ENCODE measurements at regions of chr6 and their contacts with region 1.

Region 1: DNA sequence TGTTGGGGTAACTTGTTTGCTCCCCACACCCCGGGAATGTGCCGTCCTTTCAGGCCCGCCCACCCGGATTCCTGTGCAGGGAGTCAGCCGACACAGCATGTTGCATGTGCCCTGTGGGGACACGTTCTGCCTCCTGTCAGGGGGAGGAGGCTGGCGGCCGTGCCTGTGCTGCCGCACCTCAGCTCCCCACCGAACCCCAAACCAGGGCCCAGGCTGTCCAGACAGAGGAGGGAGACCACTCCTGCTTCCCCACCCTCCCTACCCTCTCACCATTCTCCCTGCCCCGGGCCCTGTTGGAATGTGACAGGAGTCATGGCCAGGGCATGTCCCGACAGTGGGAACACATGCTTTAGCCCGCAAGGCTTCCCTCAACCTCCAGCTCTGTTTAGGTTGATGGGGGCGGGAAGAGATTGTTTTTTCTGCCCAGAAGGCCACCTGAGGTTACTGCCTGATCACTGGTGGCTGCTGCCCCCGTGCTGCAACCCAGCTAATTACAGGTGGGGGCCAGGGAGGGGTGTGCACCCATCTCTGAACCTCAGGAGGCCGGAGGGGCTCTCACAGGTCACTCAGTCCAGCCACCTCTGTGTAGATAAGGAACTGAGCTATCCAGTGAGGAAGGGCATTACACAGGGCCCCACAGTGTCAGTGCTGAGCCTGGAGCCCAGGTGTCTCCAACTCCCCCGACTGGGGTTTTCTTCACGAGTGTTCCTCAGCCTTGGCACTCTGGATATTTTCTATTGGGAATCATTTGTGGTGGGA is 13.6 kb downstream of the LRRC73 start:
- DNase-seq: peak; percentile 80
- ATAC-seq: peak; percentile 66
- H3K4me3 ChIP-seq: peak overlapping the region in 1 of 3 experiments; percentile 27; a peak in 1 of 6 replicates
- H3K27ac ChIP-seq: peak overlapping the region; percentile 46
- H3K4me1 ChIP-seq: peaks cover 22% of the 10 kb centered on the region
- H3K27me3 ChIP-seq: no peaks in the 10 kb centered on the region
- CTCF ChIP-seq: peak; percentile 97
- EP300 ChIP-seq: 0 out of 4 replicates have a peak, but pooled peaks of 1 of the 2 experiments have one; percentile 15
- POLR2A ChIP-seq: no peak
- RAD21 ChIP-seq: peak; percentile 98

Region 2: DNA sequence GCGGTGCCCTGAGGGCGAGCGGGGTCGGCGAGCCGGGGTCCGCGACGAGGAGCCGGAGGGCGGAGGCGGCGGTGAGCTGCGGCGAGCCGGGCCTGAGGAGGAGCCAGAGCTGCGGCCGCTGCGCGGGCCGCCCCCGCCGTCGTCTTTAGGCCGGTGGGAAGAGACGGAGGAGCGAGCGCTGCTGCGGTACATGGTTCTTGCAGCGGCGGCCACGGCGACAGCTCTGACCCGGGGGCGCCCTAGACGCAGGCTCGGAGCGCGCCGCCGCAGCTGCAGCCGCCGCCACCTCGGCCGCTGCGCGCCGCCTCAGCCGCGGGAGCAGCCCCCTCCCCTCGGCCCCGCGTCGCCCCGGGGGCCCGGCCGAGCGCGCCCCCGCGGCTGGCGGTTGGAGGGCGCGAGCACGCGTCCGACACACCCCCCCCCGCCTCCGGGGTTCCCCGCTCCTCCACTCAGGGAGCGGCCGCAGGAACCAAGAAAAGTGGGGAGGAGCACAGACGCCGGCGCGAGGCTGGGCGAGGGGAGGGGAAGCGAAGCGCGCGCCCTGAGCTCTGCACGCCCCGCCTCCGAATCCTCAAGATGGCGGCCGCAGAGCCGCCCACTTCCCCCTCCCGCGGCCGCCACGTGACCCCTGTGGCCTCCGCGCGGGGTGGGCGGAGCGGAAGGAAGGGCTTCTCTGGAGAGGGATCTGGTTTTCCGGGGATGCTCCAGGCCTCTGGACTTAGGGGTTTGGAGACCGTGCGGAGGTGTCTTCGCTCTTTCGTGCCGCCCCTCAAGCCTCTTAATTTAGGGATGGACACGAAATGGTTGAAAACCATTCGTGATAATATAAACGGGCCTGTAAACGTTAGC is 127.2 kb before region 1 on chr6 and contains the start of gene ZNF318:
- CTCF ChIA-PET with region 1: no interaction called
- POLR2A ChIA-PET with region 1: no interaction called
- in situ Hi-C with region 1: no loop called
- intact Hi-C with region 1: loop called (anchors 5 kb)
- DNase-seq: peak; percentile 93
- ATAC-seq: peak; percentile 89
- H3K4me3 ChIP-seq: peak within 1 kb of the TSS; percentile 60 to 81 (median 66)
- H3K27ac ChIP-seq: peak within 1 kb of the TSS; percentile 65
- H3K4me1 ChIP-seq: peaks cover 38% of the 10 kb centered on the region
- H3K27me3 ChIP-seq: no peaks in the 10 kb centered on the region
- CTCF ChIP-seq: 0 out of 2 replicates have a peak, but pooled peaks have one; percentile 6
- EP300 ChIP-seq: no peak
- POLR2A ChIP-seq: peak in 1 of 2 experiments; percentile 59; a peak in 3 of 4 replicates
- RAD21 ChIP-seq: peak; percentile 53; the same call in 1 of the 2 replicates
- total RNA-seq, gene ZNF318: 13.0 and 19.4 TPM in 2 replicates

Region 3: DNA sequence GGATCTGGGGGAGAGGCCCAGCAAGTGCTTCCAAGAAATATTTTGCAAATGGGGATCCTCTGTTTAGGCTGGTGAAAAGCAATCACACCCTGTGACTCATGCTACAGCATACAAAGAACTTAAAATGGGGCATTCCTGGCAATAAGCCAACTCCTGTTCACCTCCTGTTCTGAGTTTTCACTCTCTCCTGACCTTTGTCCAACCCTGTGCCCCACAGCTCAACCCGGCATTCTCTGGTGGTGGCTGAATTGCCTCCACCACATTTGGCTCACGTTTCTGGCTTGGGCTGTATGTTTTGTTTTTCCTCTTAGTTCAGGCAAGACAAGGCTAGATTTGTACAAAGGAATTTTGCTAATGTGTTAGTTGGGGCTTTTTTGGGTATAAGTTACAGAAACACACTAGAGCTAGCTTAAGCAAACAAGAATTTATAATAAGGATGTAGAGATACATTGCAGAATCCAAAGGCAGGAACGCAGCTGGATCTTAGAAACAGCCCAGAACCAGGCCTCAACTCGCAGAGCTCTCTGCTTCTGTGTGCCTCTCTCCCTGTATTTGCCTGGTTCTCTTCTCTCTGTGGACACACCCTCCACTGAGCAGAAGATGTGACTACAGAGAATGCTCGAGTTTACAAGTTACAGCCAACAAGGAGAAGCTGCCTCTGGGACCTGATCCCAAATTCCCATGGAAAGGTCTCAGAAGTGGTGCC is 59.8 kb before region 1 on chr6:
- CTCF ChIA-PET with region 1: no interaction called
- POLR2A ChIA-PET with region 1: interaction called, 13 read pairs
- in situ Hi-C with region 1: no loop called
- intact Hi-C with region 1: loop called (anchors 10 kb)
- DNase-seq: peak; percentile 97
- ATAC-seq: peak; percentile 89
- H3K4me3 ChIP-seq: peak overlapping the region in 2 of 3 experiments; percentile 1 to 42; a peak in 3 of 6 replicates
- H3K27ac ChIP-seq: peak overlapping the region; percentile 63
- H3K4me1 ChIP-seq: peaks cover 34% of the 10 kb centered on the region
- H3K27me3 ChIP-seq: no peaks in the 10 kb centered on the region
- CTCF ChIP-seq: no peak
- EP300 ChIP-seq: peak in 1 of 2 experiments; percentile 66; a peak in 2 of 4 replicates
- POLR2A ChIP-seq: peak in 1 of 2 experiments; percentile 25; a peak in 1 of 4 replicates
- RAD21 ChIP-seq: no peak

Region 4: DNA sequence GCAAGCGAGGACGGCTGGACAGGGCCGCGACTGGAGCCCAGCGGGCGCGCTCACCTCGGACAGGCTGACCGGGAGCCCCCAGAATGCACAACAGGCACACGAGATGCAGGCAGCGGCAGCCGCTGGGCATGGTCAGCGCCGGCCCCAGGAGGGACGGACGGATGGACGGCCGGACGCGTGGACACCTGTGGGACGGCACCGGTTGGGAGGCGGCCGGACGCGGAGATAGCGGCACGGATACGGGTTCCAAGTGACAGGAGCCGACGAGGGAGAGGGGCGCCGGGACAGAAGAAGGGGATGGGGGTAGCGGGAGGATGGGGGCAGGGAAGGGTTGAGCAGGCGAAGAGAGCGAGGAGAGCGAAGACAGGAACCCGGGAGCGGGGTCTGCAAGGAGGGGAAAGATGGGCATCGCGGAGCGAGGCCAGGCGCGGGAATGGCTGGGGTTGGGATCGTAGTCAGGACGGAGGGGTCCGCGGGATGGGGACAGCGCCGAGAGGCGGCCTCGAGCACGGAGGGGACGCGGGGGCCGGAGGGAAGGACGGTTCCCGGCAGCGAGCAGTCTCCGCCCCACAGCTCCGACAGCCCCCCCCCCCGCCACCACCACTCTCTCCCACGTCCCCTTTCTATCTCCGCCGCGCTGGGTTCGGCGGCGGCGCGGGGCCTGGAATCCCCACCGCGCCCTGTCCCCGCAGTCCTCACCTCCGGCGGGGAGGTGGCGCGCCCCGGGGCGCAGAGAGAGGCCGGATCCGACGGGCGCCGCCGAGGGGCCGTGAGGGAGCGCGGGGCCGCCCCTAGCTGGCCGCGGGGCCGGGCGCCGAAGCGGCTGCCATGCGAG is 41.6 kb before region 1 on chr6:
- CTCF ChIA-PET with region 1: interaction called, 53 read pairs
- POLR2A ChIA-PET with region 1: interaction called, 38 read pairs
- in situ Hi-C with region 1: loop called (anchors 5 kb)
- intact Hi-C with region 1: loop called (anchors 1 kb)
- DNase-seq: peak; percentile 67
- ATAC-seq: peak; percentile 87
- H3K4me3 ChIP-seq: peak overlapping the region; percentile 54 to 76 (median 66); a peak in 5 of 6 replicates
- H3K27ac ChIP-seq: no peak overlapping the region
- H3K4me1 ChIP-seq: peaks cover 26% of the 10 kb centered on the region
- H3K27me3 ChIP-seq: peaks cover 0 to 5% of the 10 kb centered on the region in 2 experiments; a peak in 3 of 5 replicates
- CTCF ChIP-seq: no peak; the same call in none of the 2 replicates
- EP300 ChIP-seq: no peak
- POLR2A ChIP-seq: peak in 1 of 2 experiments; percentile 33; a peak in 1 of 4 replicates
- RAD21 ChIP-seq: peak; percentile 33

Region 5: GRCh38 chr6:43477235-43478007 is 19.1 kb before region 1 on chr6 and contains the start of gene TJAP1:
- CTCF ChIA-PET with region 1: no interaction called
- POLR2A ChIA-PET with region 1: interaction called, 141 read pairs
- in situ Hi-C with region 1: no loop called
- intact Hi-C with region 1: loop called (anchors 2 kb)
- DNase-seq: peak; percentile 80
- ATAC-seq: peak; percentile 99
- H3K4me3 ChIP-seq: peak within 1 kb of the TSS; percentile 78 to 97 (median 81)
- H3K27ac ChIP-seq: peak within 1 kb of the TSS; percentile 62
- H3K4me1 ChIP-seq: peaks cover 53% of the 10 kb centered on the region
- H3K27me3 ChIP-seq: no peaks in the 10 kb centered on the region; a peak in 1 of 5 replicates
- CTCF ChIP-seq: 0 out of 2 replicates have a peak, but pooled peaks have one; percentile 21
- EP300 ChIP-seq: peak in 1 of 2 experiments; percentile 46; a peak in 1 of 4 replicates
- POLR2A ChIP-seq: peak; percentile 75 to 88
- RAD21 ChIP-seq: no peak
- total RNA-seq, gene TJAP1: 10.2 and 15.7 TPM in 2 replicates

Region 6: DNA sequence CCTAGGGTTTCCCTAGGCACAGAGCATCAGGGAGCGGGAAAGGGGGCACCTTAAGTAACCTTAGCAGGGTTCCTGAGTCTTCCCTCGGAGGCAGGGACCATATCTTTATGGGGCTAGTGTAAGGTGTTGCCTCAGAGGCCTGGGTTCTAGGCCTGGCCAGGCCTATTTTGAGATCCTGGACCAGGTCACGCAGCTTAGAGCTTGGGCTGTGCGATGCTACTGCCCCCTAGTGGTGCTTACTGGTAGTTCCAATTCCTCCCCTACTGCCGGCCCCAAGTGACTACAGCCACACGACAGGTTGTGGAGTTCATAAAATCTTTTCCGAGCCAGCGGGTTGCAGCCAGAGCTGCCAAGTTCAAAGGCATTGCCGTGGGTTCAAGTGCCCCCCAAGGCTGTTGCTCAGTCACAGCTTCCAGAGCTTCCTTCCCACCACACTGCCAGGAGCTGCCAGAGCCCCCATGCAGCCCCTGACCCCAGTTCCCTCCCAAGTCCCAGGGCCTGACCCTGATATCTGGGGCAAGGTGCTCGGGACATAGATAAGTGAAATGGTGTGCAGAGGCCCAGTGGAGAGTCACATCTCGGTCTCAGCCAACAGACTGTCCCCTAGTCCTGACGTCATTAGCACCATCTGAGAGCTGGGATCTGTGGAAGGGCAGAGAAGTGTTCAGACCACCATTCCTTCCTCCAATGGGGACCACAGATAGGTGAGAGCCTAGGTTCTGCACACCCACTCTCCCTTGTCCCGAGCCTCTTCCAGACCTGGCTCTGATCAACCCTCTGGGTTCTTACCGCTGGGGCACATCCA is 10.3 kb after region 1 on chr6:
- CTCF ChIA-PET with region 1: interaction called, 3 read pairs
- POLR2A ChIA-PET with region 1: interaction called, 18 read pairs
- in situ Hi-C with region 1: no loop called
- intact Hi-C with region 1: no loop called
- DNase-seq: peak; percentile 76
- ATAC-seq: peak; percentile 71
- H3K4me3 ChIP-seq: no peak overlapping the region; a peak in 1 of 6 replicates
- H3K27ac ChIP-seq: no peak overlapping the region
- H3K4me1 ChIP-seq: peaks cover 47% of the 10 kb centered on the region
- H3K27me3 ChIP-seq: peaks cover 3 to 7% of the 10 kb centered on the region in 2 experiments; a peak in 4 of 5 replicates
- CTCF ChIP-seq: peak; percentile 98
- EP300 ChIP-seq: no peak
- POLR2A ChIP-seq: no peak
- RAD21 ChIP-seq: peak; percentile 92

Region 7: DNA sequence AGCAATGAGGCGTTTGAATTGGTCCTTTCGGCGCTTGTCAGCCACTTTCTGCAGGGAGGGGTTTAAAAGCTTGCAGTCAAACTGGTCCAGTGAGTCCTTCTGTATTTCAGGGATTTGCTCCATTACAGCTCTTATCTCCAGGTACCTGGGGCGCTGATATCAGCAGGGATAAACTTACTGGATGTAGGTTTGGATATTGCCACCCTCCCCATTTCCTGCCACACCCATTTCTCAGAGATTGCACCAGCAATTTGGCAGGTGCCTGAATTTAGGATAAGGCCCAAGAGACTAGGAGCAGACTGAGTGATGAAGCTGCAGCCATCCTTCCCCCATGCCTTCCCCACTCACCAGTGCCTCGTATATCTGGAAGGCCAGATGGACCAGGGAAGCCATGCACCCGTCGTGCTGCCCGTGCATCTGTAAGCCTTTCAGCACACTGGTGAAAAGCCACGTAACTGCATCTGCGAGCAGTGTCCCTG is 28.0 kb after region 1 on chr6:
- CTCF ChIA-PET with region 1: no interaction called
- POLR2A ChIA-PET with region 1: no interaction called
- in situ Hi-C with region 1: no loop called
- intact Hi-C with region 1: no loop called
- DNase-seq: no peak
- ATAC-seq: no peak; the same call in 2 of the 3 replicates
- H3K4me3 ChIP-seq: no peak overlapping the region
- H3K27ac ChIP-seq: no peak overlapping the region
- H3K4me1 ChIP-seq: no peaks in the 10 kb centered on the region
- H3K27me3 ChIP-seq: no peaks in the 10 kb centered on the region
- CTCF ChIP-seq: no peak
- EP300 ChIP-seq: no peak
- POLR2A ChIP-seq: peak in 1 of 2 experiments; percentile 16; a peak in 1 of 4 replicates
- RAD21 ChIP-seq: no peak

Region 8: DNA sequence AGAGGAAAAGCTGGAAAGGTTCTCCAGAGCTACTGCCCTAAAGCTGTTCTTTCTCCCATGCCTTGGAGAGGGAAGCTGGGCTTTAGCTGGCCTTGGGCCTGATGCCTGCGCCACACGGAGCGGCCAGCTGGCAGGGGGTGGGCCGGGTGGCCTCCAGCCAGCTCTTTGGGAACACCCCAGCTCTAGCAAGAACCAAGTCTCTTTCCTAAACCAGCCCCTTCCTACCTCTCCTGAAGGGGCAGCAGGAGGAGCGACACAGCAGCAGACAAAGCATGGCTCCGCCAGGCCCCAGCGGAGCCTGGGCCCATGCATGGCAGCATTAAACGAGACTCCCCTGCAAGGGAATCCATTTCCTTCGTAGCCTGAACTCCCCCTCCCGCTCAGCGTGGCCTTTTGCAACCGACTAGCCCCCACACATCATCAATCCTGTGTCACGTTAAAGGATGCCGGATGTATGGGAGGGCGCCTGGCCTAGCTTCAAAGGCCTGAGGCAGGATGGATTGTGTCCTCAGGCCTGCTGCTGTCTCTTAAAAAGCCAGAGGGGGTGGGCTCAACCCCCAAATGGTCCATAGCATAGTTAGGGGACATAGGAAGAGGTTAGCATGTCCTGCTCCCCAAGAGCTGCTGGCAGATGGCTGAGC is 177.0 kb after region 1 on chr6:
- CTCF ChIA-PET with region 1: no interaction called
- POLR2A ChIA-PET with region 1: no interaction called
- in situ Hi-C with region 1: no loop called
- intact Hi-C with region 1: no loop called
- DNase-seq: no peak
- ATAC-seq: no peak
- H3K4me3 ChIP-seq: no peak overlapping the region
- H3K27ac ChIP-seq: peak overlapping the region; percentile 39
- H3K4me1 ChIP-seq: peaks cover 54% of the 10 kb centered on the region
- H3K27me3 ChIP-seq: no peaks in the 10 kb centered on the region
- CTCF ChIP-seq: no peak
- EP300 ChIP-seq: no peak
- POLR2A ChIP-seq: no peak
- RAD21 ChIP-seq: no peak

Measured in HepG2 (cell line).